Left cardiac atrium (tissue), 4 donors: ENCODE measurements at regions of chr2 and their contacts with region 1.

Region 1: GRCh38 chr2:45778720-45779171 is 127.3 kb downstream of the PRKCE start:
- DNase-seq: peak; percentile 72
- ATAC-seq: peak; percentile 77 to 78

Region 2: DNA sequence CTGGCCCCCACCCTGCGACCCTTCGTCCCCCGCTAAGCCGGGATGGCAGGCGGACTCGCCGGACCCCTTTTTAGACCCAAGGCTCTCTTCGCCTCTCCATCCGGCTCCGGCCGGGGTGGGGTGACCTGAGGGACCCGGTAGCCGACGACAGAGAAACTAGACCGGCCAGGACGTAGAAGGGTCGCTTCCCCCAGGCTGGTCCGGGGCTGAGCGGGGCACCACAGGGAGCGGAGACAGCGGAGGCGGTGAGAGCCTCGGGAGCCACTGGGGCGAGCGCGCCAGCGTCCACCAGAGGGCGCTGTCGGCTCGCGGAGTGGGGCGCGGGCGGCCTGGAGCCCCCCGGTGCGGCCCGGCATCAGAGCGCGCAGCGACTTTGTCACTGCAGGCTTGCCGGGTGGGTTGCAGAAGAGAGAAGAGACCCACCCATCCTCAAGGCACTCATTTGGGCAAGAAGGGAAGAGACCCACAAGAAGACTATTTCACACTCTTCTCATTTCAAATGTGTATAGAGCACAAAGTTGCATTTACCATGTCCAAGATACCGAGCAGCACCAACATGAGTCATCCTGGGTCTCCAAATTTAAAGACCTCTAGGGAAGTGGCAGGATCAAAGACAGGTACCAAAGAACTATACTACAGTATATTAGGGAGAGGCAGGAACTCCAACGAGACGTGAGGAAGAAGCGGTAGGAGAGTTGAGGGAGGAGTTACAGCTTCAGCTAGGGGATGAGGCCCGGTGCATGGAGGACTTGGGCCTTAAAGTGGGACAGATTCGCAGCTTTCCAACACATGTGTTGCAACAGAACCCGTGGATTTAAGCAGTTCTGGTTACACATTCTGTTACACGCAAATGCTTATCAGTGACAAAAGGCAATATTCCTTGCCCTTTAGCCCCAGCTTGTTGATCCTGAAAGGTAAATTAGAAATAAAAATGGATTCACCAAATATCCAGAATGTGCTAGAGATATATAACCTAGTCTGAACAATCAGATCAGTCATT is 134.9 kb before region 1 on chr2:
- intact Hi-C with region 1: loop called (anchors 5 kb)
- DNase-seq: peak; percentile 70
- ATAC-seq: peak; percentile 97 to 98

Region 3: DNA sequence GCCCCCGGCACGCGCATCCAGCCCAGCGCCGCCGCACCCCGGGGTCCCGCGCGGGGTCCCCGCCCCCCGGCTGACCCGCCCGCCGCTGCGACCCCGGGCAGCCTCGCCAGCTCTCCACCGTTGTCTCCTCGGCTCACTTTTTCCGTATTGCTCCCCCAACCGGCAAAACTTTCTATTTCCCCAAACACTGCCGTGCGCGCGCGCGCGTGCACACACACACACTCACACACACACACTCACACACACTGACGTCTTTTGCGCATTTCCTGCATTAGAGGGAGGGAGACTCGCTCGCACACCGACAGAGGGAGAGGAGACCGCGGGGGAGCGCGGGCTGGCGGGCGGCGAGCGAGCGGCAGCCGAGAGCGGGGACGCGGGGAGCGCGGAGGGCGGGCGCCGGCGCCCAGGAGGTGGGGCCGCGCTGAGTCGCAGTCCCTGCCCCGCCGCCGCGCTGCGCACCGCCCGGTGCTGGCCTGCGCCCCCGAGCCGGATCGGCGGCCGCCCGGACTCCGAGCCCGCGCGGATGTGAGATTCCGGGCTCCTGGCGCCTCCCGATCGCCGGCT is 127.8 kb before region 1 on chr2:
- intact Hi-C with region 1: loop called in 1 of 2 experiments (anchors 5 kb)
- DNase-seq: peak; percentile 95
- ATAC-seq: peak; percentile 86 to 87

Region 4: GRCh38 chr2:45935791-45936622 is 157.3 kb after region 1 on chr2:
- intact Hi-C with region 1: loop called in 1 of 2 experiments (anchors 5 kb)
- DNase-seq: peak; percentile 97
- ATAC-seq: peak; percentile 81 to 91